Activated CD4-positive, alpha-beta T cell treated with anti-CD3 and anti-CD28 coated beads for 36 hours (primary cell): ENCODE measurements at regions of chr3 and their contacts with region 1.

Region 1: DNA sequence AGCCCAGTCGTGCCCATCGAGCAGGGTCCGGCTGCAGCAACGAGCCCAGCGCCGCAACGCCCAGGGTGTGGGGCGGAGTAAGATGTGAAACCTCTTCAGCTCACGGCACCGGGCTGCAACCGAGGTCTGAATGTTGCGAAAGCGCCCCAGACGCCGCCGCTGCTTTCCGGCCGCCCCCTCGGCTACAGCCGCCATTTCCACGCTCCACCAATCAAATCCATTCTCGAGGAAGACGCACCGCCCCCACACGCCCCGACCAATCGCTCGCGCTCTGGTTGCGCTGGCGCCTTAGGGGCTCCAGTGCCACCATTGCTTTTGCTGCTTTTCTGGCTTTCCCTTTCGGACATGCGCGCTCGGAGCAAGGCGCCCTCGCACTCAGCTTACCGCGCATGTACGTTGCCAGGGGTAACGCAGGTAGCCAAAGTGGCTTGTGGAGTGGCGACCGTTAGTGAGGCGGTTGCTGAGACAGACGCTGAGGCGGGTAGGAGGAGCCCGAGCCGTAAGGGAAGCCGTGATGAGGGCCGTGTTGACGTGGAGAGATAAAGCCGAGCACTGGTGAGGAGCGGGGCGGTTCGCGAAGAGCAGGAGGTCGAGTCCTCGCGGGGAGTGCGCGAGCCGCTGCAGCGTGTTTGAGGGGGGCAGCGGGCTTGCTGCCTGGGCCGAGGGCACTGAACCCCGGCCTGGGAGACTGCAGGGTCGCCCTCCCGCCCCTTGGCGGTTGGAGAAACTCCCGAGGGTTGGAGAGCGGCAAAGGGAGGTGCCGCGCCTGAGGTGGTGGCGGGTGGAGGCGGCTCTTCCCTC is at the starts of genes IFT122 and MBD4:
- DNase-seq: peak; percentile 99
- ATAC-seq: peak; percentile 90
- H3K4me3 Mint-ChIP-seq: peak within 1 kb of the TSS; percentile 100
- H3K27ac Mint-ChIP-seq: peak within 1 kb of the TSS; percentile 91
- H3K4me1 Mint-ChIP-seq: peaks cover 63% of the 10 kb centered on the region
- H3K27me3 Mint-ChIP-seq: no peaks in the 10 kb centered on the region
- total RNA-seq, gene IFT122: 18.4 to 22.6 TPM
- total RNA-seq, gene MBD4: 51.3 to 52.4 TPM

Region 2: GRCh38 chr3:128804017-128804810 is 635.8 kb before region 1 on chr3:
- CTCF ChIA-PET with region 1: no interaction called
- POLR2A ChIA-PET with region 1: no interaction called
- intact Hi-C with region 1: loop called in 1 of 2 experiments (anchors 5 kb)
- DNase-seq: peak; percentile 78
- ATAC-seq: peak; percentile 76
- H3K4me3 Mint-ChIP-seq: peak overlapping the region; percentile 69
- H3K27ac Mint-ChIP-seq: peak overlapping the region; percentile 97
- H3K4me1 Mint-ChIP-seq: peaks cover 86% of the 10 kb centered on the region
- H3K27me3 Mint-ChIP-seq: no peaks in the 10 kb centered on the region

Region 3: GRCh38 chr3:129183569-129184395 is 256.2 kb before region 1 on chr3 and contains the start of gene CNBP:
- CTCF ChIA-PET with region 1: no interaction called
- POLR2A ChIA-PET with region 1: no interaction called
- intact Hi-C with region 1: loop called in 1 of 2 experiments (anchors 1 kb)
- DNase-seq: peak; percentile 96
- ATAC-seq: peak; percentile 95
- H3K4me3 Mint-ChIP-seq: peak within 1 kb of the TSS; percentile 96
- H3K27ac Mint-ChIP-seq: peak within 1 kb of the TSS; percentile 99
- H3K4me1 Mint-ChIP-seq: peaks cover 29% of the 10 kb centered on the region
- H3K27me3 Mint-ChIP-seq: no peaks in the 10 kb centered on the region
- total RNA-seq, gene CNBP: 305 to 379 TPM

Region 4: GRCh38 chr3:129352045-129352444 is 88.0 kb before region 1 on chr3:
- CTCF ChIA-PET with region 1: no interaction called
- POLR2A ChIA-PET with region 1: no interaction called
- intact Hi-C with region 1: no loop called
- DNase-seq: peak; percentile 13
- ATAC-seq: no peak
- H3K4me3 Mint-ChIP-seq: no peak overlapping the region
- H3K27ac Mint-ChIP-seq: no peak overlapping the region
- H3K4me1 Mint-ChIP-seq: no peaks in the 10 kb centered on the region
- H3K27me3 Mint-ChIP-seq: no peaks in the 10 kb centered on the region

Region 5: DNA sequence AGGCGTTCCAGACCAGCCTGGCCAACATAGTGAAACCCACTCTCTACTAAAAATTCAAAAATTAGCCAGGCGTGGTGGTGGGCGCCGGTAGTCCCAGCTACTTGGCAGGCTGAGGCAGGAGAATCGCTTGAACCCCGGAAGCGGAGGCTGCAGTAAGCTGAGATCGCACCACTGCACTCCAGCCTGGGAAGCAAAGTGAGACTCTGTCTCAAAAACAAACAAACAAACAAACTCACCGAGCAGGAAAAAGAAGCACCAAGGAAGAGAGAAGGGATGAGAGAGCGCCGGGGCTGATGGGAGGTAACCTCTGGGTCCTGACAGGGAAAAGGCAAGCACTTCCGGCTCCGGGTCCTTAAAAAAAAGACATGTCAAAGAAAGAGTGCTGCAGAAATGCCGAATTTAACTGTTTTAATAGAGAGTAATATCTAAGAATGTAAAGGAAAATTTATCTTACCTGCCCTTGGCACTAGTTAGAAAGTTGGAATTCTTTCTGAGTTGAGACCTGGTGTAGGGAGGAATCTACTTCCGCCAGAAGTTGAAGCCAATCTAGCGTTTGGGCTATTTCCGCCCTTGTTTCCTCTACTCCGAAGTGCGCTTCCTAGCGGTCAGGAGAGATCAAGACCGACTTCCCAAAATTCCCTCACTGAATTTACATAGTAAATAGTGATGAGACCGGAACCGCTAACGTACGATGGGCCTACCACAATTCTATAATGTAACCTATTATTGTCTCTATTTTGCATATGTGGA is 40.7 kb before region 1 on chr3:
- CTCF ChIA-PET with region 1: interaction called, 23 read pairs
- POLR2A ChIA-PET with region 1: interaction called, 24 read pairs
- intact Hi-C with region 1: loop called (anchors 1 kb)
- DNase-seq: peak; percentile 90
- ATAC-seq: peak; percentile 82
- H3K4me3 Mint-ChIP-seq: peak overlapping the region; percentile 99
- H3K27ac Mint-ChIP-seq: peak overlapping the region; percentile 98
- H3K4me1 Mint-ChIP-seq: peaks cover 29% of the 10 kb centered on the region
- H3K27me3 Mint-ChIP-seq: no peaks in the 10 kb centered on the region

Region 6: GRCh38 chr3:129893581-129894070 is 453.6 kb after region 1 on chr3 and contains the start of gene TMCC1:
- CTCF ChIA-PET with region 1: no interaction called
- POLR2A ChIA-PET with region 1: interaction called, 3 read pairs
- intact Hi-C with region 1: loop called (anchors 1 to 5 kb)
- DNase-seq: peak; percentile 92
- ATAC-seq: peak; percentile 92
- H3K4me3 Mint-ChIP-seq: peak within 1 kb of the TSS; percentile 86
- H3K27ac Mint-ChIP-seq: peak within 1 kb of the TSS; percentile 85
- H3K4me1 Mint-ChIP-seq: peaks cover 36% of the 10 kb centered on the region
- H3K27me3 Mint-ChIP-seq: no peaks in the 10 kb centered on the region
- total RNA-seq, gene TMCC1: 14.8 to 17.3 TPM

Region 7: DNA sequence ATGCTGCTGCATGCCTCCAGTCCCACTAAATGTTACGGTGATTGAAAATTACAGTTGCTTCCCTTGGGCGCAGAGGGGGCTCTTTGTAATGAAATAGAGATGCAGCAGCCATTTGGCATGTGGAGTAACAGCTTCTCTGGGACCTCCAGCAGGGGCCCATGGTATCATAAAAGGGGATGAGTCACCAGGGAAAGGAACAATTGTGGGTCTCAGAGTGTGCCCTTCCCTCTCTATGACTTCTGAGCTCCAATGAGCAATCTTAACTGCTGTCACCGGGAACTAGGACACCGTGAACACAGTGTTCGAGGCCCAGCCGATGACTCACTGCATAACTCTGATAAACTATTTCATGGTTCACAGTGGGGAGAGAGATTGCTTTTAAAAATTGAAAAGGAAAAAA is 1776.8 kb after region 1 on chr3:
- CTCF ChIA-PET with region 1: no interaction called
- POLR2A ChIA-PET with region 1: no interaction called
- intact Hi-C with region 1: no loop called
- DNase-seq: peak; percentile 7
- ATAC-seq: peak; percentile 44
- H3K4me3 Mint-ChIP-seq: no peak overlapping the region
- H3K27ac Mint-ChIP-seq: no peak overlapping the region
- H3K4me1 Mint-ChIP-seq: no peaks in the 10 kb centered on the region
- H3K27me3 Mint-ChIP-seq: no peaks in the 10 kb centered on the region